ENCODE measurements at regions of chr4 and their contacts with region 1.

Region 1: DNA sequence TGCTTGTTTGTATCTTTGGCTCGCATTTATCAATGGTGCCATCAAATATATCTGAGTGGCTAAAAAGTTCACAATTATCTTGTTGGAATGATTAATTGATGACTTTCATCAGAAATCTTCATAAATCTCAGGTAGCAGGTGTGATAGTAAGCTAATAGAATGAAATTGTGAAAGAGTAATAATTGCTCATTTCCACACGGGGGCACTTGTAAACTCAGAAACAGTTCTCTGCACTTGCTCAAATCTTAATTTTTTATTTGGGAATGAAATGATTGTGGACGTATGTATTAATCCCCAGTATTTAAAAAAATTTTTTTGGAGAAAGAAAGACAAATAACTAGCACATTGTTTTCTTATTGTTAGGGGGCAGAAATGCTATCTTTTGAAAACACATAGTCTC is 132.8 kb downstream of the DTHD1 start:
- DNase-seq: no peak
- ATAC-seq: peak; percentile 61
- H3K4me3 ChIP-seq: no peak overlapping the region
- H3K27ac ChIP-seq: no peak overlapping the region
- H3K4me1 ChIP-seq: no peaks in the 10 kb centered on the region
- H3K27me3 ChIP-seq: no peaks in the 10 kb centered on the region
- CTCF ChIP-seq: peak; percentile 30 to 56 (median 34); a peak in 4 of 6 replicates
- EP300 ChIP-seq: no peak
- POLR2A ChIP-seq: no peak
- RAD21 ChIP-seq: peak; percentile 79

Region 2: DNA sequence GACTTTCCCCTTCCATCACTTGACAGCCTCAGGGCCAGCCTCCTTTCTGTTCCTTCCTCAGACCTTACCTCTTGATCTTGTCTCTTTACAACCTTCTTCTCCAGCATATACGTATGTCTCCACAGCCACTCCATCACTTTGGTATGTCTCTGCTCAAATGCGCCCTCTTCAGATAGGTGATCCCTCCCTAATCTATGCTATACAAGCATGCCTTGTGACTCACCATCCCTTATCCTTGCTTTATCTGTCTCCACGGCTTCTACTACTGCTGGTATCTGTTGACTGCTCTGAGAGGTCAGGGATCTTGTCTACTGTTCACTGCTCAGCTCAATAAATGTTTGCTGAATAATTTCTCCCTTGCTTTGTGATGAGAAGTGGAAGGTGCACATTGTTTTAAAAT is 178.9 kb before region 1 on chr4:
- CTCF ChIA-PET with region 1: no interaction called
- POLR2A ChIA-PET with region 1: no interaction called
- RAD21 ChIA-PET with region 1: no interaction called
- SMC1A ChIA-PET with region 1: no interaction called
- in situ Hi-C with region 1: no loop called
- intact Hi-C with region 1: no loop called
- DNase-seq: no peak
- ATAC-seq: no peak; the same call in 2 of the 3 replicates
- H3K4me3 ChIP-seq: no peak overlapping the region
- H3K27ac ChIP-seq: no peak overlapping the region
- H3K4me1 ChIP-seq: no peaks in the 10 kb centered on the region; the same call in 1 of the 2 replicates
- H3K27me3 ChIP-seq: no peaks in the 10 kb centered on the region
- CTCF ChIP-seq: no peak
- EP300 ChIP-seq: no peak
- POLR2A ChIP-seq: no peak
- RAD21 ChIP-seq: no peak

Region 3: DNA sequence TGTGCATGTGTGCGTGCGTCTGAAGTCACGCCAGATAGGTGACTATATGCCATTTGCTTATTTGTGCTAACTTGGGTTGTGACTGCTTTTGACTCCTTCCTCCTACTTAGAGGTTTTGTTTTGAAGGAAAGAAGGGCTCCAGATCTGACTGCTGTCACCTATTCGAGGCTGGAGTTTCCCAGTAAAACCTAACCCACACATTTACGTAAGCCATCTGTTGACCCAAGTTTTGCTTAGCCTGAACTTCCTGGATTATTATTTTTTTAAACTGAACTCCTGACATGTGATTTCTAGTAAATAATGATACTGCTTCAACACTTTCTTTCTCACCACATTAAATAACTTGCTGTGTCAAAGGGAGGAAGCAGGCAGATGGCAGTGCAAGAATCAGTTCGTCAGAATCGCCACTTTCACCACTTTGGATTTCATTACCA is 91.3 kb before region 1 on chr4:
- CTCF ChIA-PET with region 1: no interaction called
- POLR2A ChIA-PET with region 1: no interaction called
- RAD21 ChIA-PET with region 1: no interaction called
- SMC1A ChIA-PET with region 1: no interaction called
- in situ Hi-C with region 1: no loop called
- intact Hi-C with region 1: no loop called
- DNase-seq: peak; percentile 64
- ATAC-seq: peak; percentile 13
- H3K4me3 ChIP-seq: no peak overlapping the region
- H3K27ac ChIP-seq: peak overlapping the region; percentile 93
- H3K4me1 ChIP-seq: peaks cover 65% of the 10 kb centered on the region
- H3K27me3 ChIP-seq: no peaks in the 10 kb centered on the region
- CTCF ChIP-seq: no peak
- EP300 ChIP-seq: peak; percentile 66 to 81; a peak in 3 of 4 replicates
- POLR2A ChIP-seq: 0 out of 2 replicates have a peak, but pooled peaks have one; percentile 31
- RAD21 ChIP-seq: 0 out of 2 replicates have a peak, but pooled peaks have one; percentile 11

Region 4: GRCh38 chr4:36333303-36333877 is 80.9 kb before region 1 on chr4:
- CTCF ChIA-PET with region 1: no interaction called
- POLR2A ChIA-PET with region 1: no interaction called
- RAD21 ChIA-PET with region 1: no interaction called
- SMC1A ChIA-PET with region 1: no interaction called
- in situ Hi-C with region 1: no loop called
- intact Hi-C with region 1: no loop called
- DNase-seq: no peak
- ATAC-seq: no peak
- H3K4me3 ChIP-seq: peak overlapping the region; percentile 52
- H3K27ac ChIP-seq: peak overlapping the region; percentile 85
- H3K4me1 ChIP-seq: peaks cover 22% of the 10 kb centered on the region
- H3K27me3 ChIP-seq: no peaks in the 10 kb centered on the region
- CTCF ChIP-seq: no peak
- EP300 ChIP-seq: no peak
- POLR2A ChIP-seq: 0 out of 2 replicates have a peak, but pooled peaks have one; percentile 21
- RAD21 ChIP-seq: 0 out of 2 replicates have a peak, but pooled peaks have one; percentile 1

Region 5: DNA sequence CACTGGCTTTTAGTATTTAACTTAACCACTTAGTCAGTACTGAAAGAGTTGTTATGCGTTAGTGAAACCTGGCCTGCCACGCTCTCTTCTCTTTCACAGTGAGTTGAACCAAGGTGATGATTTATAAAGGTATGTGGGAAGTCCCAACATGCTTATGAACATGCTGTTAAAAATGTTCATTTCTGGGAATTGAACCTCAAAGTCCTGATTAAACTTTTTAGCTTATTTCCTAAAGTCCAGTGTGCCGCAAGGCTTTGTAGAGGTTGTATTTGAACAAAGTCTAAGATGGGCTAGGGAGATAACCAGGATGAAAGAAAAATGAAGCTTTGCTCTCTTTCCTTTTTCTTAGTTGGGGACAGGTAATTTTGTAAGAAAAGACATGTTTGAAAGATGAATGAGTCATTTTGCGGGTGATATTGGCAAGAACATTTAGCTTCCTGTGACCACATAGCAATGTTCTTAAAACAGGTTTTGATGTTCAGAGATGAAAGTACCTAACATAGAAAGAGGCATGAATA is 137.5 kb after region 1 on chr4:
- CTCF ChIA-PET with region 1: interaction called, 3 read pairs
- POLR2A ChIA-PET with region 1: no interaction called
- RAD21 ChIA-PET with region 1: interaction called, 11 read pairs
- SMC1A ChIA-PET with region 1: interaction called, 9 read pairs
- in situ Hi-C with region 1: no loop called
- intact Hi-C with region 1: no loop called
- DNase-seq: peak; percentile 69
- ATAC-seq: peak; percentile 95
- H3K4me3 ChIP-seq: no peak overlapping the region
- H3K27ac ChIP-seq: peak overlapping the region; percentile 90
- H3K4me1 ChIP-seq: no peaks in the 10 kb centered on the region; the same call in 1 of the 2 replicates
- H3K27me3 ChIP-seq: no peaks in the 10 kb centered on the region
- CTCF ChIP-seq: no peak
- EP300 ChIP-seq: peak; percentile 63 to 81; a peak in 3 of 4 replicates
- POLR2A ChIP-seq: no peak
- RAD21 ChIP-seq: 0 out of 2 replicates have a peak, but pooled peaks have one; percentile 7

Region 6: GRCh38 chr4:36930562-36931111 is 516.4 kb after region 1 on chr4:
- CTCF ChIA-PET with region 1: no interaction called
- POLR2A ChIA-PET with region 1: no interaction called
- RAD21 ChIA-PET with region 1: no interaction called
- SMC1A ChIA-PET with region 1: no interaction called
- in situ Hi-C with region 1: no loop called
- intact Hi-C with region 1: loop called (anchors 10 kb)
- DNase-seq: no peak
- ATAC-seq: no peak
- H3K4me3 ChIP-seq: no peak overlapping the region
- H3K27ac ChIP-seq: no peak overlapping the region
- H3K4me1 ChIP-seq: no peaks in the 10 kb centered on the region
- H3K27me3 ChIP-seq: no peaks in the 10 kb centered on the region
- CTCF ChIP-seq: no peak
- EP300 ChIP-seq: no peak
- POLR2A ChIP-seq: no peak
- RAD21 ChIP-seq: no peak

Region 7: DNA sequence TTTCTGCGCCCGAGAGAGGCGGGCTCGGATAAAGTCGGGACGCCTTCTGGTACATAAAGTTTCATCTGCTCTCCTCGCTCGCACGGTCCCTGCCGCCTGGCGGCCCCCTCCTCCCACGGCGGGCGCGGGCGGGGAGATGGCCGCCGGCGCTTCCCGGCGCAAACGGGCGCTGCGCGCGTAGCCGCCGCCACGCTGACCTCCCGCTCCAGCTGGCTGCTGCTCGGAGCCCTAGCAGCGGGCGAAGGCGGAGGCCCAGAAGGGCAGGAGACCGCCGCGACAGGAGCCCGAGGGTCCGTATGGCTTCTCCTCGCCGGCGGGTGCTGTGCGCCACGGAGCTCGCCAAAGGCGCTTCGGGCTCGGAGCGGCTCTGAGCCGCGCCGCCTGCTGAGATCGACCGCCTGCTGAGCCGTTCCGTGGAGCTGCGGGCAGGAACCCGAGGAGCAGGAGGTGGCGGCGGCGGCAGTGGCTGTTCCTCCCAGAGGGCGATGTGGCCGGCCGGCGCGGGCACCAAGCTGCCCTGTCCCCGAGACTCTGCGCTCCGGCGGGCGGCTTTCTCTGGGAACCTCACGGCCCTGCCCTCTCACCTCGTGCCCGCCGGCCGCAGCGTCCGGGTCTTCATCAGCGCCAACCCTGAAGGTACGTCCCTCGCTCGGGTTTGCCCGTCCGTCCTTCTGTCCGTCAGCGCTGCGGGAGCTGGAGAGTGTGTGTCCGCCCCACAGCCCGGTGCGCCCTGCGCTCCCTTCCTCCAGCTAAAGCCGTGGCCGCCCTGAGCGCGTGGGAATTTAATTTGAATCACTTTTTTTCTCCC is 830.5 kb after region 1 on chr4 and contains the start of gene NWD2:
- CTCF ChIA-PET with region 1: no interaction called
- POLR2A ChIA-PET with region 1: no interaction called
- RAD21 ChIA-PET with region 1: no interaction called
- SMC1A ChIA-PET with region 1: no interaction called
- in situ Hi-C with region 1: no loop called
- intact Hi-C with region 1: loop called (anchors 10 kb)
- DNase-seq: no peak
- ATAC-seq: no peak
- H3K4me3 ChIP-seq: no peak within 1 kb of the TSS
- H3K27ac ChIP-seq: no peak within 1 kb of the TSS
- H3K4me1 ChIP-seq: no peaks in the 10 kb centered on the region
- H3K27me3 ChIP-seq: peaks cover 0 to 5% of the 10 kb centered on the region in 2 experiments; a peak in 3 of 4 replicates
- CTCF ChIP-seq: no peak
- EP300 ChIP-seq: no peak
- POLR2A ChIP-seq: no peak
- RAD21 ChIP-seq: no peak
- polyA plus RNA-seq, gene NWD2: not detected

Region 8: GRCh38 chr4:37383579-37384229 is 969.5 kb after region 1 on chr4:
- CTCF ChIA-PET with region 1: interaction called, 28 read pairs
- POLR2A ChIA-PET with region 1: no interaction called
- RAD21 ChIA-PET with region 1: interaction called, 10 read pairs
- SMC1A ChIA-PET with region 1: interaction called, 20 read pairs
- in situ Hi-C with region 1: loop called (anchors 5 kb)
- intact Hi-C with region 1: no loop called
- DNase-seq: no peak
- ATAC-seq: peak; percentile 90
- H3K4me3 ChIP-seq: no peak overlapping the region
- H3K27ac ChIP-seq: no peak overlapping the region
- H3K4me1 ChIP-seq: no peaks in the 10 kb centered on the region
- H3K27me3 ChIP-seq: peaks cover 0 to 4% of the 10 kb centered on the region in 2 experiments; a peak in 1 of 4 replicates
- CTCF ChIP-seq: peak; percentile 55 to 69 (median 60)
- EP300 ChIP-seq: no peak
- POLR2A ChIP-seq: no peak
- RAD21 ChIP-seq: peak; percentile 71

Region 9: DNA sequence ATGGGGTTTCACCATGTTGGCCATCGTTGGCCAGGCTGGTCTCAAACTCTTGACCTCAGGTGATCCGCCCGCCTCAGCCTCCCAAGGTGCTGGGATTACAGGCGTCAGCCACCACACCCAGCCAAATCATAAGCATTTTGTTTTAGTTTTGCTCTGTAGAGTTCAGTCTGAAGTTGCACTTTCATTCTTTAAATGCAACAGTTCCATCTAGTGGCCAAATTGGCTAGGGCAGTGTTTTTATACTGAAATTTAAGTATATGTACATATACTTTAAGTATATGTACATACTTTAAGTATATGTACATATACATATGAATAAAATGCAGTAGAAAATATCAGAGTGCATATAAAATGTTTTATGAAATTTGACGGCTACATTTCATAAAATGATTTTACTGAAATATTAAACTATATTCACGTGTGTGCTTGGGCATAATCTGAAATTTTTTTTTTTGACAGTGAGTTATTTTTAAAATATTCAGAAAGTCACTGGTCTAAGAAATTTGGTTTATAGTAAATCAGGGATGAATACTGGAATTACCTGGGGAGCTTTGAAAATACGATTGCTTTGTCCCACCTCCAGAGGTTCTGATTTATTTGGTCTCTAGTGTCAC is 975.8 kb after region 1 on chr4:
- CTCF ChIA-PET with region 1: interaction called, 28 read pairs
- POLR2A ChIA-PET with region 1: no interaction called
- RAD21 ChIA-PET with region 1: interaction called, 10 read pairs
- SMC1A ChIA-PET with region 1: interaction called, 20 read pairs
- in situ Hi-C with region 1: no loop called
- intact Hi-C with region 1: loop called (anchors 1 kb)
- DNase-seq: no peak
- ATAC-seq: peak; percentile 84
- H3K4me3 ChIP-seq: no peak overlapping the region
- H3K27ac ChIP-seq: no peak overlapping the region
- H3K4me1 ChIP-seq: no peaks in the 10 kb centered on the region
- H3K27me3 ChIP-seq: no peaks in the 10 kb centered on the region
- CTCF ChIP-seq: peak; percentile 62 to 75 (median 70)
- EP300 ChIP-seq: no peak
- POLR2A ChIP-seq: no peak
- RAD21 ChIP-seq: peak; percentile 79